Ascending aorta (tissue), 2 donors: ENCODE measurements at regions of chr6 and their contacts with region 1.

Region 1: GRCh38 chr6:8063761-8064637 is at the start of gene BLOC1S5:
- DNase-seq: peak; percentile 91 to 99
- H3K4me3 ChIP-seq: peak within 1 kb of the TSS; percentile 84 to 85
- H3K27ac ChIP-seq: peak within 1 kb of the TSS; percentile 87 to 92
- H3K4me1 ChIP-seq: peaks cover 0 to 4% of the 10 kb centered on the region in 2 donors
- H3K27me3 ChIP-seq: no peaks in the 10 kb centered on the region
- CTCF ChIP-seq: peak in 2 of 3 experiments; percentile 6 to 17
- total RNA-seq, gene BLOC1S5: 13.3 TPM

Region 2: DNA sequence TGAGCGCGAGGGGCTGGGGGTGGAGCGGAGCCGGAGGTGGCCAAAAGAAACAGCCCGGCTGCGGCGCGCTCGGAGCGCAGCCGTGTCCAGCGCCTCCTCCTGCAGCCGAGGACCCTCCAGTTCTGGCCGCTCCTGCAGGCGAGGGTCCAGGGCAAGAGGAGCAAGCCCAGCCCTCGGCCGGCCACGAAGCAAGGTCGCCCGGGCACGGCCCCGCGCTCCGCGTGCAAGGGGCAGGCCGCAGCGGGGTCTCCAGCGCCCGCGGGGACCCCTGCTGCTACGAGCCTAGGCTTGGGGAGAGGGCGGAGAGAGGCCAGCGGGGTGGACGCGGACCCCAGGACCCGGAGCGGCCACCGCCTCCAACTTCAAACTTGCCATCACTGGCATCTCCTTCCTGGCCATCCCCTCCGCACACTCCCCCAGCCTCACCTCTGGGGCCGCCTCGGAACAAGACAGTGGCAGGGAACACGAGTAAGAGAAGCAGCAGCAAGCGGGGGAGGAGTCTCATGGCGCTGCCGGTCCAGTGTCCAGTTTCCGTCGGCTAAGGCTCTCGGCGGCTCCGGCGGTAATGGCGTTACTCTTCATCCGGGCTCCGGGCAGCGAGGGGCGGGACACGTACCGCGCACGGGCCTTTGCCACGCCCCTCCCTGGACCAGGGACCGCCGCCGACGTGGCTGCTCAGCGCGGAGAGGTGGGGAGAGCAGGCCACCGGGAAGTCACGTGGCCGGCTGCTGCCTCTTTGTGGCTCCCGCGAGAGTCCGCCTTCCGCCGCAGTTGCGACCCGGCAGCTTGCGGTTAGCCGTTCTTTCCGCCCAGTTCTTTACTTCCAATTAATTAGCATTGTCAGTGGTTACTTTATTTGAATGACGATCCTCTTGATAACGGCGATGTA is 751.1 kb before region 1 on chr6 and contains the start of gene SSR1:
- intact Hi-C with region 1: loop called (anchors 10 kb)
- DNase-seq: peak; percentile 94 to 99
- H3K4me3 ChIP-seq: peak within 1 kb of the TSS; percentile 69 to 99
- H3K27ac ChIP-seq: peak within 1 kb of the TSS; percentile 93 to 98
- H3K4me1 ChIP-seq: peaks cover 4 to 20% of the 10 kb centered on the region in 2 donors
- H3K27me3 ChIP-seq: no peaks in the 10 kb centered on the region
- CTCF ChIP-seq: no peak
- total RNA-seq, gene SSR1: 46.4 TPM

Region 3: GRCh38 chr6:7910654-7911344 is 153.2 kb before region 1 on chr6 and contains the start of gene TXNDC5:
- intact Hi-C with region 1: loop called (anchors 5 kb)
- DNase-seq: peak in 1 of 2 donors; percentile 85
- H3K4me3 ChIP-seq: peak within 1 kb of the TSS; percentile 99
- H3K27ac ChIP-seq: peak within 1 kb of the TSS; percentile 70 to 76
- H3K4me1 ChIP-seq: peaks cover 3 to 9% of the 10 kb centered on the region in 2 donors
- H3K27me3 ChIP-seq: no peaks in the 10 kb centered on the region
- CTCF ChIP-seq: no peak
- total RNA-seq, gene TXNDC5: 192 TPM

Region 4: GRCh38 chr6:8102122-8102958 is 38.3 kb after region 1 on chr6 and contains the start of gene EEF1E1:
- intact Hi-C with region 1: loop called (anchors 1 kb)
- DNase-seq: peak; percentile 84 to 96
- H3K4me3 ChIP-seq: peak within 1 kb of the TSS; percentile 90 to 94
- H3K27ac ChIP-seq: peak within 1 kb of the TSS; percentile 32 to 47
- H3K4me1 ChIP-seq: peaks cover 0 to 9% of the 10 kb centered on the region in 2 donors
- H3K27me3 ChIP-seq: no peaks in the 10 kb centered on the region
- CTCF ChIP-seq: no peak
- total RNA-seq, gene EEF1E1: 15.5 TPM